MCF 10A (cell line): ENCODE measurements at regions of chr11 and their contacts with region 1.

Region 1: DNA sequence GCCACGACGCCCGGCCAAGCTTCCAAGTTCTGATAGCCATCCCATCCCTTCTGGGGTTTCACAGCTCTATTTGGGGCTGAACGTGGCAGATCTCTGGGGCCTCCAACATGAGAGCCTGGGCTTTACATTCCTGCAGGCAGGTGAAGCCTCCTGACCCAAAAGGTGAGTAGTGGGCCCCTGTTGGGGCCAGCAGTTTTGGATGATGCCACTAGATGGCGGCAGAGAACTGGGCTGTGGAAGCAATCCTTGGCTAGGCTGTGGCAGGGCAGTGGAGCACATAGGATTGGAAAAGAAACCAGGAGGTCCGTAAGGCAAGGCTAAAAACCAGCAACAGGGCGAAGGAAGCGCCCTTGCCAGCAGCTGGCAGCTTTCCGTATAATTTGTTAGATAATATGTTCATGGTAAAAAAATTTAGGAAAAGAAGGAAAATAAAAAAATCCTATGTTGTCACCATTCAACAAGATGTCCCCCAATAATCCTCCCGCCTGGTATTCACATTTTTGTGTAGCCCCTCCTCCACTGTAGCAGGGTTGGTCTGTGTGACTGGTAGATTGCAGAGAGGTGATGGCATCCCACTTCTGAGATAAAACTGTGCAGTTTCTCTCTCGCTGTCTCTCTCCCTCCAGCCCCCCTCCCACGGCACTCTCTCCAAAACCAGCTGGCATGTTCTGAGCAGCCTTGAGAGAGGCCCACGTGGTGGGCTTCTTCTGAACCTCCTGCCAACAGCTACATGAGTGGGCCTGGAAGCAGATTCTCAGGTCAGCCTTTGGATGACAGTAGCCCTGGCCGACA is 43.6 kb upstream of the OR4B1 start:
- DNase-seq: peak; percentile 62
- H3K4me3 Mint-ChIP-seq: no peak overlapping the region
- H3K27ac Mint-ChIP-seq: no peak overlapping the region
- H3K4me1 Mint-ChIP-seq: no peaks in the 10 kb centered on the region
- H3K27me3 Mint-ChIP-seq: no peaks in the 10 kb centered on the region
- CTCF ChIP-seq: peak; percentile 96

Region 2: GRCh38 chr11:48116437-48117228 is 56.4 kb before region 1 on chr11:
- CTCF ChIA-PET with region 1: interaction called, 12 read pairs
- POLR2A ChIA-PET with region 1: no interaction called
- intact Hi-C with region 1: loop called (anchors 2 kb)
- DNase-seq: peak; percentile 36
- H3K4me3 Mint-ChIP-seq: no peak overlapping the region
- H3K27ac Mint-ChIP-seq: no peak overlapping the region
- H3K4me1 Mint-ChIP-seq: no peaks in the 10 kb centered on the region
- H3K27me3 Mint-ChIP-seq: no peaks in the 10 kb centered on the region
- CTCF ChIP-seq: peak; percentile 50

Region 3: GRCh38 chr11:48161951-48162884 is 10.8 kb before region 1 on chr11:
- CTCF ChIA-PET with region 1: interaction called, 27 read pairs
- POLR2A ChIA-PET with region 1: no interaction called
- intact Hi-C with region 1: no loop called
- DNase-seq: no peak
- H3K4me3 Mint-ChIP-seq: no peak overlapping the region
- H3K27ac Mint-ChIP-seq: no peak overlapping the region
- H3K4me1 Mint-ChIP-seq: no peaks in the 10 kb centered on the region
- H3K27me3 Mint-ChIP-seq: no peaks in the 10 kb centered on the region
- CTCF ChIP-seq: no peak

Region 4: GRCh38 chr11:48184446-48184845 is 11.4 kb after region 1 on chr11:
- CTCF ChIA-PET with region 1: interaction called, 34 read pairs
- POLR2A ChIA-PET with region 1: no interaction called
- intact Hi-C with region 1: no loop called
- DNase-seq: no peak
- H3K4me3 Mint-ChIP-seq: no peak overlapping the region
- H3K27ac Mint-ChIP-seq: no peak overlapping the region
- H3K4me1 Mint-ChIP-seq: no peaks in the 10 kb centered on the region
- H3K27me3 Mint-ChIP-seq: no peaks in the 10 kb centered on the region
- CTCF ChIP-seq: no peak

Region 5: DNA sequence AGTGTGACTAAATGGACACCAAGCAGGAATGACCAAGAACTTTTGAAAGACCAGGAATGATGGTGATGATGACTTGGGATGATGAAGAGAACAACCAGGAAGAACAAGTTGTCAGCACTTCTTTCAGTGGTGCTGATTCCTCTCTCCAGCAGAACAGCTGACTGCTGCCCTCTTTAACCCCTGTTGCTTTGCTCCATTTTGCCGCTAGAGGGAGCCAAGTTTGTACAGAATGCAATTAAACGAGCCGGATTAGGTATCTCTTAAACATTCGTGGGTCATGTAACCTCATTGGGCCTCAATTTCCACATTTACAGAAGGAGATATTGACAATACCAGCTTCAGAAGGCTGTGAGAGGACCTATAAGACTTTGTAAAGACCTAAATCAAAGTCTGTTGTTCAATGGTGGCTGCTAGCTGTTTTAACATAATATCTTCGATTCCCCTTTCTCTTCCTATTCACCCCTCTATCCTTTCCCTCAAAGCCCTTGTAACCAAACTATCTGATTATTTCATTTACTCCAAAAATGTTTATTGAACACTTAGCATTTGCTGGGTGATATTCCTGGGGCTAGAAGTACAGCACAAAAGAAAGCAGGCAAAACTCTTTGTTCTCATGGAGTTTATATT is 134.9 kb after region 1 on chr11:
- CTCF ChIA-PET with region 1: interaction called, 7 read pairs
- POLR2A ChIA-PET with region 1: no interaction called
- intact Hi-C with region 1: loop called (anchors 2 kb)
- DNase-seq: peak; percentile 72
- H3K4me3 Mint-ChIP-seq: no peak overlapping the region
- H3K27ac Mint-ChIP-seq: no peak overlapping the region
- H3K4me1 Mint-ChIP-seq: no peaks in the 10 kb centered on the region
- H3K27me3 Mint-ChIP-seq: no peaks in the 10 kb centered on the region
- CTCF ChIP-seq: peak; percentile 92

Region 6: DNA sequence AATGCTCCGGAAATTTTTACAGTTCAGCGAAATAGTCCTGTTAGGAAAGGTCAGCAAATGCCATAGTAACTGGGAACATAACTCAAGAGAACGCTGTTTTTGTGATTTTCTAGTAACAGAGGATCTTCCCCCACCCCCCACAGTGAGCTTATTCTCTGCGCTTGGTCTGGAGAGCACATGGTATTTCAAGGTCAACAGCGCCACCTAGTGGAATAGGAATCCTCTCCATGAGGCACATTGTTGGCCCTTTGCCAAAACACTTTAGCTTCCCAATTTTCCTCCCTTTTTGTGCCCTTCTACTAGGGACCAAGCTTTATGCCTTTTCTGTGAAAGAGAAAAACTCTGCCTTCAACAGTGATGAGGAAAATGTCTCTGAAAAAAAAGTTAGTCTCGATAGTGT is 1822.6 kb after region 1 on chr11:
- CTCF ChIA-PET with region 1: interaction called, 4 read pairs
- POLR2A ChIA-PET with region 1: no interaction called
- intact Hi-C with region 1: loop called (anchors 5 kb)
- DNase-seq: peak; percentile 84
- H3K4me3 Mint-ChIP-seq: peak overlapping the region; percentile 45
- H3K27ac Mint-ChIP-seq: no peak overlapping the region
- H3K4me1 Mint-ChIP-seq: no peaks in the 10 kb centered on the region
- H3K27me3 Mint-ChIP-seq: no peaks in the 10 kb centered on the region
- CTCF ChIP-seq: peak; percentile 61